ENCODE measurements at regions of chr18 and their contacts with region 1.

Region 1: DNA sequence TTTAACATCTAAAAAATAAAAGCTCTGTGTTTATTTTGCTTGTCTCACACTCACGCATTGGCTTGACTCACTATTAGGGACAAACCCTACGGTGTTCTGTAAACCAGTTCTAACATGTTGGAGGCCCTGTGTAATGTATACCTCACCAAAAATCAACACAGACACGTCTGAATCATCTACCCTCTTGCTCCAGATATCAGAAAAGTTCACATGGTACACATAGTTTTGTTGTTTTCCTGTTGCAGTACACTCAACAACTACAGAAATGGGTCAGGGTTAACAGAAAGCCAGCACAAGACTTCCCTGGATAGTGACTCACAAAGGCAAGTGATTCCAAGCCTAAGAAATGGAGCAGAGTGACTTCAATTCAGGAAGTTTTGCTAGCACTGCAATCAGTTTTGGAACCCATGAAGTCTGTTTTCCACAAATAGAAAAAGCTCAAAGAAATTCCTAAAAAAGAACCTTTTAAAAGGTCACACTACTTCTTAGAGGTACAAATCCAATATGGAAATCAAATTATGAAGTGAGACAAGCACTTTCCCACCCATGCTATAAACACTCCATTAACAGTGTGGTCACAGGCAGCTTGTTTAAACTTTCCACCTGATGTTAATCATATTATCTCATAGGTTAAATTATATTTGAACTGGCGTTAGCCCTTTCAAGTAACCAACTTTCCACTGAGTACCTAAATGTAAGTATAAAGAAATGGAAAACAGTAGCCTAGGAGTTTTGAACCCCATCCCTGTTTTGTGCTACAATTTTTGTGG is 87.4 kb downstream of the GAREM1 start:
- DNase-seq: no peak
- ATAC-seq: peak; percentile 88
- H3K4me3 ChIP-seq: no peak overlapping the region
- H3K27ac ChIP-seq: peak overlapping the region in 1 of 2 donors; percentile 32
- H3K4me1 ChIP-seq: peaks cover 4 to 13% of the 10 kb centered on the region in 2 donors
- H3K27me3 ChIP-seq: no peaks in the 10 kb centered on the region

Region 2: GRCh38 chr18:32276906-32277305 is 106.3 kb before region 1 on chr18:
- intact Hi-C with region 1: loop called in 1 of 2 experiments (anchors 5 kb)
- DNase-seq: no peak
- ATAC-seq: no peak
- H3K4me3 ChIP-seq: no peak overlapping the region
- H3K27ac ChIP-seq: peak overlapping the region; percentile 75 to 99
- H3K4me1 ChIP-seq: peaks cover 4 to 24% of the 10 kb centered on the region in 2 donors
- H3K27me3 ChIP-seq: no peaks in the 10 kb centered on the region

Region 3: DNA sequence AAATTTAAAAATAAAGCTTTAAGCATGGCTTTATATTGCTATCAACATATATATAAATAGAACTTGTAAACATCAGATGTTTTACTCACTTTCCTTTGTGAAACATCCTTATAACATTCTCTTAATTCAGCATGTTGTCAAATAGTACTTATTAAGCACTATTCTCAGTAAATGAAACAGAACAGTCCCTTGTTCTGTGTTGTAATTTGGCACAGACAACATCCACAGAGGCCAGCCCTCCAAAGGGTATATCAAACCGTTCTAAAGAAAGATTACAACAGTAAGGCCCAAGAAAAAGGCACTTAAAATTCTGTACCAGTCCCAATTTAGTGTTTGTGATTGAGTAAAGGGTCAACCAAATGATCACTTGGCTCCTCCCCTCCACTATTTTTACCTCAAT is 41.5 kb after region 1 on chr18:
- intact Hi-C with region 1: loop called in 1 of 2 experiments (anchors 5 kb)
- DNase-seq: no peak
- ATAC-seq: peak; percentile 64
- H3K4me3 ChIP-seq: no peak overlapping the region
- H3K27ac ChIP-seq: no peak overlapping the region
- H3K4me1 ChIP-seq: peaks cover 3 to 8% of the 10 kb centered on the region in 2 donors
- H3K27me3 ChIP-seq: no peaks in the 10 kb centered on the region

Region 4: GRCh38 chr18:32439802-32440201 is 56.6 kb after region 1 on chr18:
- intact Hi-C with region 1: loop called in 1 of 2 experiments (anchors 10 kb)
- DNase-seq: no peak
- ATAC-seq: no peak
- H3K4me3 ChIP-seq: no peak overlapping the region
- H3K27ac ChIP-seq: no peak overlapping the region
- H3K4me1 ChIP-seq: peaks cover 8 to 9% of the 10 kb centered on the region in 2 donors
- H3K27me3 ChIP-seq: no peaks in the 10 kb centered on the region

Measured in aorta (tissue), 5 donors.